Cardiac septum (tissue), 1 donor: ENCODE measurements at regions of chr11 and their contacts with region 1.

Region 1: GRCh38 chr11:8911029-8911826 is at the start of gene AKIP1:
- DNase-seq: peak; percentile 96
- total RNA-seq, gene AKIP1: 28.1 TPM

Region 2: DNA sequence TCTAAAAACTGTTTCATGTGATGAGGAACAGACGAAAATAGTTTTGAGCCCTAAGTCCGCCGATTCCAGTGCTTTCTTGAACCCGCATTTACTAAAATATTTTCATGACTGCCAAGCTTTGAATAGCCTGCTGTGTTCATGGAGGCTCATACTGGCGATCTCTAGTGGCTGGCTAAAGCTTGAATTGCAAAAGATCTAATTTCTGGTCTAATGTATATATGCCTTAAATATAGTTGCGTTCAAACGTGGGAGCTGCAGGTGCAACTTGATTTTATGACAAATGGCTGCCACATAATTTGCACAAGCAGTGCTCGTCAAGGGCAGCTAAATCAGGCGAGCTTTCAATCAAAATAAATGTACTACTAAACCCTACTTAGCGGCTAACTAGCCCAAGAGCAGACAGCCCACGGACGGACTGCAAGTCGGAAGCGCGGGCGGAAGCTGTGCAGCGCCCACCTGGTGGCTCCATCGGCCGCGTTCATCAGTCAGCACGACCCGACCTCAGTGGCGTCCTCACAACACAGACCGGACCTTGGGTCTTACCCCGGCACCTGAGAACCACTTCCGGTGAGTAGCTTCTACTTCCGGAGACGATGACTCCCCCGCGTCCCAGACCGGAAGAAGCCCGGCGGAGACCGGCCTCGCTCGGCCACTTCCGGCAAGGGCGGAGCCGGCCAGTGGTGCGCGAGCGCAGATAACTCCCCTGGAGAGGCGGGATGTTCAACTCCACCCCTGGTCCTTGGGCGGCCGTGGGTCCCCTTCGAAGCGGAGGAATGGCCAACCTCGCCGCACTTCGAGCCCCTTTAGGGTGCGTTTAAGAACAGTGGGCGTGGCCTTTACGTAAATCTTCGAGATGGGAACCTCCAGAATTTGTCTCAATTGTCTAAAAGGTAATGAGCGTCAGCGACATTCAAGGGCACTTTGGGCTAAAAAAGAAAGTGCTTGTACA is 222.5 kb before region 1 on chr11:
- intact Hi-C with region 1: loop called (anchors 5 kb)
- DNase-seq: peak; percentile 97

Region 3: GRCh38 chr11:8870411-8871170 is 40.6 kb before region 1 on chr11:
- intact Hi-C with region 1: loop called (anchors 2 kb)
- DNase-seq: peak; percentile 79

Region 4: GRCh38 chr11:8937159-8937558 is 25.9 kb after region 1 on chr11:
- intact Hi-C with region 1: no loop called
- DNase-seq: no peak

Region 5: GRCh38 chr11:8964324-8965320 is 53.4 kb after region 1 on chr11 and contains the start of gene TMEM9B:
- intact Hi-C with region 1: loop called (anchors 5 kb)
- DNase-seq: peak; percentile 97
- total RNA-seq, gene TMEM9B: 43.7 TPM